RWPE1 (cell line): ENCODE measurements at regions of chr1 and their contacts with region 1.

Region 1: DNA sequence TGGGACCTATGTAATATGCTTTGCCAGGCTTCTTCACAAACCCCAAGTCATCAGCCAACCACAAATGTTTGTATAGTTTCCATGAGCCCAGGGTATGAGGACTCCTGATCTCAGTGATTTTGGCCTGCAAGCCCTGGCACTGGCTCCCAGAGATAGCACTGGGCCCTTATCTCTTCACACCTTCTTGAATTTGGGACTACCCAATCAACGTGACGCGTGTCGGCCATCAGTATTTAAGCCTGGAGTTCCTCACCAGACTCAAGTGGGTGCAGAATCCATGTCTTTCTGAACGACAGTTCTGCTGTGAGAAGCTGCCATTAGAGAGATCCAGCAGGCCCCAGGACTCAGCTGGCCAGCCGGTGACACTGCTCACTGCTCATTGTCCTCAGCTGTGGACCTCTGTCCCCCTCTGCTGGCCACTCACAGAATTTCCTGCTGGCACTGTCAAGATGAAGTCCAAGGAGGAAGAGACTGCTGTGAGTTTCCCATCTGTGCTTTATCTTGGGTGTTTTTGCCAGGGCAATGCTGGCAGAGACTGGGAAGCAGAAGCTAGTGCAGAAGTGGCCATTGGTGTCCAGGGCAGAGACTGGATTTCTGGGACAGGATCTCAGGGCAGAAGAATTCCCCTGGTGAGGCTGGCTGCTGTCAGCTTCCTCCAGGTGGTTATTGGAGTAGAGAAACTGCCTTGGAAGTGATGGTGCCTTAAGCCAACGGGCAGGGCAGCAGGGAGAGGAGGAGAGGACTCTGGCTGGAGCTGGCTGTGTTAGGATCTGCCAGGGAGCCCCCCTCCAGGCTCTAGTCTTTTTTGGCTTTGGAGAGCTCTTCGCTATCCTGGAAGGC is 28.4 kb downstream of the TMCC2 start:
- DNase-seq: peak; percentile 88
- H3K27ac ChIP-seq: peak overlapping the region; percentile 51
- CTCF ChIP-seq: peak; percentile 94

Region 2: GRCh38 chr1:204975570-204976235 is 280.5 kb before region 1 on chr1:
- CTCF ChIA-PET with region 1: interaction called, 34 read pairs
- POLR2A ChIA-PET with region 1: no interaction called
- DNase-seq: peak; percentile 89
- H3K27ac ChIP-seq: no peak overlapping the region
- CTCF ChIP-seq: peak; percentile 80

Region 3: DNA sequence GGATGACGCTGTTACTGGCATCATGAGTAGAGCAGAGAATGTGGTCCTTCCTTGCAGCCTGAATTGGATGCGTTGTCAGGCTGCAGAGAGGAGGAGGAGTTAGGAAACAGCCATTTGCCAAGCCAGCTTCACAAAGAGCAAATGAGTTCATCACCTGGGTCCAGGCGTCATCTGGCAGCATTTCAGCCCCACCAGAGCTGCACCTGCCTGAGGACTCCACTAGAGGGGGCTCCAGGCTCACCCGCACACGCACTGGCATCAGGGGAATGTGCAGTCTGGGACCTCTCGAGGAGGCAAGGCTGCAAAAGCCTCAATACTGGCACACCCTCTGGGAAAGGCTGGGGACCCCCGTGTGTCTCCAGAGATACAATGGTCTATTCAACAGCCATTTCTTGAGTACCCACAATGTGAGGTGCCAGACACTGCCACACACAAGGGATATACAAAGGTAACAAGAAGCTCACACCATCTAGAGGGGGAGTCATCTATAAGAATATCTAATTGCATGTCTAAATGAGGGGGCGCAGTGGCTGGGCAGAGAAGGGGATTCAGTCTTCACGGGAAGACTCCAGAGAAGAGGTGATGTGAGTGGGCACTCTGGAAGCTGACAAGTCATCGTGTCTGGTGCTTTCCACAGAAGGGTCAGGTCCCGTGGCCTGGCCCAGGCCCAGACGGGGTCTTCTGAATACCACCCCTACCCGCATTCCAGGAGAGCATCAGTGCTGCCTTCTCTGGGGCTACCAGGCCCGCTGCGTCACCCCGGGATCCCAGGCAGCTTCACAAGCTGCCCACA is 266.7 kb before region 1 on chr1:
- CTCF ChIA-PET with region 1: interaction called, 30 read pairs
- POLR2A ChIA-PET with region 1: no interaction called
- DNase-seq: peak; percentile 95
- H3K27ac ChIP-seq: no peak overlapping the region
- CTCF ChIP-seq: peak; percentile 78

Region 4: GRCh38 chr1:205077158-205077933 is 178.8 kb before region 1 on chr1:
- CTCF ChIA-PET with region 1: interaction called, 13 read pairs
- POLR2A ChIA-PET with region 1: no interaction called
- DNase-seq: no peak
- H3K27ac ChIP-seq: peak overlapping the region; percentile 64; the same call in 1 of the 2 replicates
- CTCF ChIP-seq: no peak

Region 5: GRCh38 chr1:205227584-205228006 is 28.6 kb before region 1 on chr1 and contains the start of gene TMCC2:
- CTCF ChIA-PET with region 1: interaction called, 166 read pairs
- POLR2A ChIA-PET with region 1: interaction called, 3 read pairs
- DNase-seq: peak; percentile 98
- H3K27ac ChIP-seq: peak within 1 kb of the TSS; percentile 78
- CTCF ChIP-seq: no peak

Region 6: DNA sequence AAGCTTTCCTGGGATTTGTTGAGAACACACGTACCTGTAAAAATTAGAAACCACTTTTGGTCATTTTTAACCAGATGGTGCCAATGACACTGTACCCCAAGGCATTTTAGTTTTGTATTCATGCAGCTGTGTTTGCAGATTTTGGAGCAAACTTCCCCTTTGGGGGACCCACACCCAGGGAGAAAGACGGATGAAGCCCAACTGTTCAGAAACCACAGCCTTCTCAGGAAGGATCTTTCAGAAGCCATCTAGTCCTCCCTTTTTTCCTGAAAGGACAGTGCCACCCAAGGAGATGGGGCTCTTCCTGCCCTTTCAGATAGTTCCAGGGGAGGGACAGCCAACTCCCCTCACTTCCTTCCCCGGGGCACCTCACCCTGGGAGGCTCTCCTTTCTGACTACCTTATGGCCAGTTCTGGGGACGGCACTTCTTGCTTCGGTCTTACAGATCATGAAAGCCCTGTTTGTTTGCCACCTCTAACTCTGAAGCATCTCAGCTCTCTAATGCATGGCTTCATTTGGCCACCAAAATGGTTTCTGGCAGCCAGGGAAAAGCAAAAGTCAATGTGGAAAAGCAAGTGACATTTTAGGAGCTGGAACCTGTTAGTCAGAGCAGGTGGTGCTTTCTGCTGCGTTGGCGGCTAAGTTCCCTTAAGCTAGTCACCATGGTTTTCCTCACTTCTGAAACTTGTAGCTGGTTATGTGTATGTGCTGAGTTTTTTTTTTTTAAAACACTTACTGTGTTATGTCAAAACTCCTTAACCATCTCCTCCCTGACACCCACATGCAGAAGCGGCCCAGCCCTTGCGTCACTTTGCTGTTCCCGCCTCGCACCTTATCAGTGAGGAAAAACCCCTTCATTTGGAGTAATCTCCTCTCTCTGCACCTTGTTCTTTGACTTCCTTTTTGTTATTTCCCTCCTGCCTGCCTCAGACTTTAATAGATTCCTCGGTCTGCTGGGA is 18.4 kb before region 1 on chr1:
- CTCF ChIA-PET with region 1: interaction called, 166 read pairs
- POLR2A ChIA-PET with region 1: no interaction called
- DNase-seq: no peak
- H3K27ac ChIP-seq: no peak overlapping the region
- CTCF ChIP-seq: no peak

Region 7: DNA sequence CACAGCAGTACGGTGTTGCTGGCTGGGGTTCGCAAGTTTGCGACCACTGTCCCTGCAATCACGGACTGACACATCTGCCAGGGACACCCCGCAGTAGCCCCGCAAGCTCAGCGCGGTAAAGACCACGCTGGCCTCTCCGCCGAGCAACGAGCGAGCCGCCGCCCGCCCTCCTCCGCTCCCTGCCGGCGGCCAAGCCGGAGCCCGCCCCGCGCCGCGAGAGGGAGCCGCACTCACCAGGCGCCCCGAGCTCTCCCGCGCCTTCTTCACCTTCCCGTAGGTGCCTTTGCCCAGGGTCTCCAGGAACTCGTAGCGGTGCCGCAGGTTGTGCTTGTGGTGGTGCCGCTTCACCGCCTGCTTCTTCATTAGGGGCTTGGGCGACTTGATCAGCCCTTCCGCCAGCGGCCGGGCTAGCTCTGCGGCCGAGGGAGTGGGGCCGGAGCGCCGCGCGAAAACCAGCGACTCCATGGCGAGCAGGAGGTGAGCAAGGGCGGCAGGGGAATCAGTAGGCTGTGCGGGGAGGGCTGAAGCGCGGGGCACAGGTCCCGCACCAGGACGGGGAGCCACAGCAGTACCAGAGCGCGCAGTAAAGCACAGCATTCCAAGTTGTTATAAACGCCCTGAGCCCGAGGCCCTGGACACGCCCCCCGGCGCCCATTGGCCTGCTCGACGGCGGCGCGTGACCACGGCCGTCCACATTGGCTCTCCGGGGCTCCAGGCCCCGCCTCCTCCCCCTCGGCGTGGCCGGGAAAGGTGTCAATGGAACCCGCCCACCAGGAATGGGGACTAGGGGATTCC is 65.2 kb after region 1 on chr1 and contains the start of gene NUAK2:
- CTCF ChIA-PET with region 1: interaction called, 23 read pairs
- POLR2A ChIA-PET with region 1: no interaction called
- DNase-seq: peak; percentile 96
- H3K27ac ChIP-seq: peak within 1 kb of the TSS; percentile 98
- CTCF ChIP-seq: peak; percentile 33

Region 8: DNA sequence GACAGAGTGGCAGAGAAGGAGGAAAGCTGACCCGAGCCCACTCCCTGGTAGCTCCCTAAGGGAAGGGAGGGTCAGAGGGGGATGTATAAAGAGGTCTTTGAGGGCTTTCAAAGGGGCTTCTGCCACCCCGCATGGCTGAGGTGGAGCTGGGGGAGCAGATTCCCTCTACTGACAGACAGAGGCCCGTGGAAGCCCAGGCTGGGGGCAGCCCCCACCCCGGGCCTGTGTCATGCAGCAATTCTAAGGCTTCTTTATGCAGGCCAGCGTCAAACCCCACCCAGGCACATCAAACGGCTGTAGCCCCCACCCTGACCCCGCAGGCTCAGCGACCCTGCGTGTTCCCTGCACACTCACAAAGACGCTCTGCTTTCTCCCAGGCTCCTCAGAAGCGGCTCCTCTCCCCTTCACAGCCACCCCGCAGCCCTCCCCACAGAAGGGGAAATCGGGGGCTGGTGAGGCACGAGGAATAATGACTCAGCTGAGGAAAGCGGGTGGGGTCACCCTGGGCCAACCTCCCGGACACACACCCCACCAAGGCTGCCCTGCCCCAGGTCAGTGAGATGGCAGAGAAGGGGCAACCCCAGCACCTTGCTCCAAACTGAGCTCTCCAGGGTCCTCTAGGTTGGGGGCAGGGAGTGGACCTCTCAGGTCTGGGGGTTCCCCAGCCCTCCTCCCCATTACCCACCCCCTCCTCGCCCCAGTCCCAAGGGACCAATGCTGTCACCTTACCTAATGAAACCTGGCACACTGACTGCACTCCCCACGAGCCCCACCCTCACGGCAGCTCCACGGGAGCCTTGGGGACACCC is 413.4 kb after region 1 on chr1:
- CTCF ChIA-PET with region 1: no interaction called
- POLR2A ChIA-PET with region 1: no interaction called
- DNase-seq: no peak
- H3K27ac ChIP-seq: no peak overlapping the region
- CTCF ChIP-seq: no peak